ENCODE measurements at regions of chr3 and their contacts with region 1.

Region 1: DNA sequence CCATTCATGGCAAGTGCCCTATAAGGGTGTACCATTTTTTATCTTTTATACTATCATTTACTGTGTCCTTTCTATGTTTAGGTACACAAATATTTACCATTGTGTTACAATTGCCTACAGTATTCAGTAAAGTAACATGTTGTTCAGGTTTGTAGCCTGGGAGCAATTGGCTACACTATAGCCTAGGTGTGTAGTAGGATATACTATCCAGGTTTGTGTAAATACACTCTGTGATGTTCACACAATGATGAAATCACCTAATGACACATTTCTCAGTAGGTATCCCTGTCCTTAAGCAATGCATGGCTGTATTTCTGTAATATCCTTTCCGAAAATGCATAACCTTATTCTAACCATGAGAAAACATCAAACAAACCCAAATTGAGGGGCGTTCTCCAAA is 17.9 kb upstream of the CNOT10 start:
- DNase-seq: no peak

Region 2: DNA sequence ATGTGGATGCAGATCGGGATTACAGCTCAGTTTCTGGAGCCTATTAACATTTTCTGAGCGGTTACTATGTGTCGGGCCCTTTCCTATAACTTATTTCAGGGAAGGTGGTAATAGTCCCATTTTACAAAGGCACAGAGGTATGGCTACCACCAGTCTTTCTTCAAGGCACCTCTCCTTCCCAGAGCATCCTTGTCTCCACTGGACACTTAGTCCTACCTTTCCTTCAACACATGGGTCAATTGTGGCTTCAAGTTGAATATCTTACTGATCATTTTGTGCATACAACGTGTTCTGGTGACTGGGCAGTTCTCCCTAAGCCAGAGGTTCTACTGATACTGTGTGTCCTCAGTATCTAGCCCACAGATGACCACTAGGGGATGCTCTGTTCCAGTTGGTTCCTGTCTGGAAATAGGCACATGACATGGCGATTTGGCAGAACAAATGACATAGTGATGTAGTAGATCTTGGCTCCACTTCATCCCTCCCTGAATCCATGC is 489.4 kb before region 1 on chr3:
- in situ Hi-C with region 1: loop called (anchors 10 kb)
- DNase-seq: peak; percentile 79

Region 3: DNA sequence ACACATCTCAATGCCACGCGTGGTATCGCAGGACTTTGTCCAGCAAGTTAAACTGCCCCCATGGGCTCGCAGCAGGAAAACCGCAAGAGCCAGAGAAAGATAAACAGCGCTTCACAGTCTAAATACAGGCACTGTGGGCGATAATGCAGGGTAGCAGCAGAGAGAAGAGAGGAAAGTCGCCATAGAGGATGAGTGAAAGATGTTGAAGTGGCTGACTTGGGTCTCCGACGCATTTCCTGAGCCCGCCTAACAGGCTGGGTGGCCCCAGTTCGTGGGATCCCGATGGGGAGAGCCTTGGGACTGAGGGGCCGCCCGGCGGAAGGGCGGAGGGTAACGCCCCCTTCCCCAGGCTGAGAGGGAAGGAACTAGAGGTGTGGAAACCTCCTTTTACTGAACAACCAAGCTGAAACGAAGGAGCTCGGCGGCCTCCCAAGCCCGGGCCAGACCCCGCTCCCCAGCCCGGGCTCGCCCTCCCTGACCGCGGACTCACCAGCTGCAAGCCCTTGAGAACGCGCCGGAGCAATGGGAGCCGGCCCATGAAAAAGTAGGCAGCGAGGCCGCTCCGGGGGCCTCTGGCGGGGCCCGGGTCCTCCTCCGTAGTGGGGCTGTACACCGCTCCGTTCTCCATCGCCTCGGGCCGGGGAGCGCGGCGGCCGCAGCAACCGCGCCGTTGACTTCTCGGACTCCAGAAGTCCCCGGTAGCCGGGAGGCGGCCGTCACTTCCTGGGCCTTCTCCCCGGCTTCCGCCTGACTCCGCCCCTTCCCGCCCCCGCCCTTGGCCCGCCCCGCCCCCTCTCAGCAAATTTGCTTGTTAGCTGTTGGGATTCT is 164.8 kb before region 1 on chr3 and contains the start of gene CMTM6:
- in situ Hi-C with region 1: loop called (anchors 10 kb)
- DNase-seq: peak; percentile 79

Region 4: DNA sequence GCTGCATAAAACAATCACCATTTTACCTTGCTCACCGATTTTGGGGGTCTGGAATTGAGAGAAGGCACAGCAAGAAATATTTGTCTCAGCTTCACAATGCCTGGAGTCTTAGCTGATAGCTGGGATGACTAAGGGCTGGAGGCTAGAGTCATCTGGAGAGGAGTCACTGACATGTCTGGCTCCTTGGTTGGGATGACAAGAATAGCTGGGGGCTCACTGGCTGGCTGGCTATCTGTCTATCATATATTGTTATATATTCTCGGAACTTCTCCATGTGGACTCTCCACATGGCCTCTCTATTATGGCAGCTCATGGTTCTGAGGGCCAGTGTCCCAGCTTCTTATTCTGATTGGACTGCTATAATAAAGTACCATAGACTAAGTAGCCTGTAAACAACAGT is 130.7 kb after region 1 on chr3:
- in situ Hi-C with region 1: no loop called
- DNase-seq: no peak

Region 5: GRCh38 chr3:32975891-32976595 is 308.9 kb after region 1 on chr3:
- in situ Hi-C with region 1: no loop called
- DNase-seq: no peak